ENCODE measurements at regions of chr1 and their contacts with region 1.

Region 1: GRCh38 chr1:236465959-236466303 is 57.9 kb upstream of the LGALS8 start:
- DNase-seq: no peak
- H3K4me3 ChIP-seq: no peak overlapping the region
- H3K27ac ChIP-seq: no peak overlapping the region
- H3K4me1 ChIP-seq: no peaks in the 10 kb centered on the region
- H3K27me3 ChIP-seq: no peaks in the 10 kb centered on the region
- CTCF ChIP-seq: no peak
- POLR2A ChIP-seq: no peak

Region 2: DNA sequence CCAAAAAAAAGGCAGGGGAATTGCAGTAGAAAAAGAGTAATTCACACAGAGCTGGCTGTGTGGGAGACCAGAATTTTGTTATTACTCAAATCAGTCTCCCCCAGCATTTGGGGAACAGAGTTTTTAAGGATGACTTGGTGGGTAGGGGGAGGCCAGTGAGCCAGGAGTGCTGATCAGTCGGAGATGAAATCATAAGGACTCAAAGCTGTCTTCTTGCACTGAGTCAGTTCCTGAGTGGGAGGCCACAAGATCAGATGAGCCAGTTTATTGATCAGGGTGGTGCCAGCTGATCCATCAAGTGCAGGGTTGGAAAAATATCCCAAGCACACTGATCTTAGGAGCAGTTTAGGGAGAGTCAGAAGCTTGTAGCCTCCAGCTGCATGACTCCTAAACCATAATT is 95.5 kb before region 1 on chr1:
- intact Hi-C with region 1: loop called (anchors 10 kb)
- DNase-seq: no peak
- H3K4me3 ChIP-seq: no peak overlapping the region
- H3K27ac ChIP-seq: no peak overlapping the region
- H3K4me1 ChIP-seq: no peaks in the 10 kb centered on the region
- H3K27me3 ChIP-seq: no peaks in the 10 kb centered on the region
- CTCF ChIP-seq: no peak
- POLR2A ChIP-seq: no peak

Region 3: GRCh38 chr1:236451796-236452373 is 14.0 kb before region 1 on chr1:
- intact Hi-C with region 1: no loop called
- DNase-seq: no peak
- H3K4me3 ChIP-seq: no peak overlapping the region
- H3K27ac ChIP-seq: no peak overlapping the region
- H3K4me1 ChIP-seq: no peaks in the 10 kb centered on the region
- H3K27me3 ChIP-seq: no peaks in the 10 kb centered on the region
- CTCF ChIP-seq: no peak
- POLR2A ChIP-seq: no peak

Region 4: DNA sequence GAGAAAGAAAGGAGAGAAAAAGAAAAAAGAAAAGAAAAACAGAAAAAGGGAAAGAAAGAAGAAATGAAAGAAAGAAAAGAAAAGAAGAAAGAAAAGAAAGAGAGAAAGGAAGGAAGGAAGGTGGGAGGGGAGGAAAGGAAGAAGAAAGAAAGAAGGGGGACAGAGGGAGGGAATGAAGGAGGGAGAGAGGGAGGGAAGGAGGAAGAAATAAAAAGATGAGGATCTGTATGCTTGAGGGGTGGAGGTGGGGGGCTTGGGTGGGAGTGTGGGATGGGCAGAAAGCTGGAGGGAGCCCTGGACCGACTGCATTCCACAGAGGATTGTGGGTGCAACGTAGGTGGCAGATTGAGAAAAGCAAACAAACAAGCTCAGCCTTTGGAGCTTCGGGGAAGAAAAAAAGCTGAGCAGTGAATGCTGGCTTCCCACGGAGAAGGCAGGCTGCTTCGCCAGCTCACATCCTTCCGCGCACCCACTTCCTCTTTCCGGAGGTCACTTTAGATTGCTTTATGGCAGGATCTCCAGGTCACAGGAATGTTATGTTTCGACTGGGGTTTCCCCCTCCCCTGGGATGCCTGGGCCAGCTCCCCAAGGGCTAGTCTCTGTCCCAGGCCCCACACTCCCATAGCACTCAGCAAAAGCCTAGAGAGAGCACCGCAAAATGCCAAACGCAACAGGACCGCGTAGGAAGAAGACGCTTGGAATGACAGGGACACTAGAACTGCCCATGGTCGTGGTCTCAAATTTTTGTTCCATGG is 37.1 kb after region 1 on chr1:
- intact Hi-C with region 1: no loop called
- DNase-seq: peak in 1 of 2 donors; percentile 50
- H3K4me3 ChIP-seq: peak overlapping the region; percentile 23 to 59 (median 42)
- H3K27ac ChIP-seq: peak overlapping the region; percentile 76 to 79
- H3K4me1 ChIP-seq: no peaks in the 10 kb centered on the region
- H3K27me3 ChIP-seq: no peaks in the 10 kb centered on the region
- CTCF ChIP-seq: no peak
- POLR2A ChIP-seq: no peak

Region 5: DNA sequence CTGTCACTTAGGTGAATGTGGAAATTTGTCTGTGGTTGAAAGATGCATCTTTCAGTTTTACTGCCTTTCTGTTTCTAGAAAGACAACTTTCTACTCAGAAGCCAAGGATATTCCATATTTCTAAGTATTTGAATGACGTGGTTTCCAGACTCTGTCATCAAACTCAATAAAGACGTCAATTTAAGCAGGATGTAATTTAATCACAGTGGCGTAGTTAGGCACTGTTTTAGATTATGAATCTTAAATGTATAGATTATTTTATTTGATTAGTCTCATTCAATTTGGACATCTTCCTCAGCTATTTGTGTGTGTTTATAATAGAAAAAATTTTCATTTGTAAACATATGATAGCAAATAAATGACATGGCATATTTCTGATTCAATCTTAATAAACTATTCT is 875.0 kb after region 1 on chr1:
- intact Hi-C with region 1: no loop called
- DNase-seq: no peak
- H3K4me3 ChIP-seq: no peak overlapping the region
- H3K27ac ChIP-seq: no peak overlapping the region
- H3K4me1 ChIP-seq: no peaks in the 10 kb centered on the region
- H3K27me3 ChIP-seq: no peaks in the 10 kb centered on the region
- CTCF ChIP-seq: no peak
- POLR2A ChIP-seq: no peak